ENCODE measurements at regions of chr20 and their contacts with region 1.

Region 1: GRCh38 chr20:63230800-63231268 is 4.9 kb upstream of the BIRC7 start:
- DNase-seq: peak; percentile 54
- H3K4me3 ChIP-seq: no peak overlapping the region
- H3K27ac ChIP-seq: no peak overlapping the region
- H3K4me1 ChIP-seq: no peaks in the 10 kb centered on the region
- H3K27me3 ChIP-seq: peaks cover 0 to 10% of the 10 kb centered on the region in 2 experiments
- CTCF ChIP-seq: peak; percentile 25 to 78
- POLR2A ChIP-seq: no peak

Region 2: DNA sequence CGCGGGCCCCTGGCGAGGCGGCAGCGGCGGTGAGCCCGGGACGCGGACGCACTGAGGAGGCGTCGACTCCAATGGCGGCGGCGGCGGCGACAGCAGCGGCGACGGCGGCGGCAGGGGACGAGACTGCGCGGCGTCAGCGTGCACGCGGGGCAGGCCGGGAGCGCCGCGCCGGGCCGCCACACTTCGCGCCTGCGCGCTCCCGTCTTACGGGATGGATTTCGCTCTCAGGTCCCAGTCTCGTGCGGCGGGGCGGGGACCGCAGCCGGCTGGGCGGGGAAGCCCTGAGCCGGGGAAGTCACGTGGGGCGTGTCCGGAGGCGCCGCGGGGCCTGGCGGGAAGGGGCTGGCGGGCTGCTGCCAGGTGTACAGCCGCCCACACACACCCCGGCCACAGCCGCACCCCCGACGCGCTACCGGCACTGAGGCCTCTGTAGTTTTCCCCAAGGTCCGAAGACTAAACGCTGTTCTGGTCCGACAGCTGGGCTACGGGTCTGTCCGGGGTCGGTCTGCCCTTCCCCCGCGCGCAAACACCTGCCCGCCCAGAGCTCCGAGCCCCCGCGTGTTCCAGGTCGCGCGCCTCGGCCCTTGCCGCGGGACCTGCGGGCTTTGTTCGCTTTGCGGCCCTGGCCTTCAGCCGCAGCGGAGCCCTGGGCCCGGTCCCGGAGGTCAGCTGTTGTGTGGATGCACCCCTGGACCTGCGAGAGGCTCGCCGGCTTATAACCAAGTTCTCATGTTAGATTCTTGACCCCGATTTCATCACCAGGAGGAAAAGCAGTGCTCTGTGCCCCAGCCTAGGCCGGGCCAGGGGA is 14.6 kb before region 1 on chr20 and contains the start of gene YTHDF1:
- CTCF ChIA-PET with region 1: interaction called, 15 read pairs
- POLR2A ChIA-PET with region 1: no interaction called
- dilution Hi-C with region 1: no loop called
- intact Hi-C with region 1: no loop called
- DNase-seq: peak; percentile 94
- H3K4me3 ChIP-seq: peak within 1 kb of the TSS; percentile 59 to 94 (median 86)
- H3K27ac ChIP-seq: peak within 1 kb of the TSS; percentile 79
- H3K4me1 ChIP-seq: peaks cover 13% of the 10 kb centered on the region
- H3K27me3 ChIP-seq: no peaks in the 10 kb centered on the region
- CTCF ChIP-seq: no peak
- POLR2A ChIP-seq: peak; percentile 75
- total RNA-seq, gene YTHDF1: 41.1 and 44.4 TPM in 2 replicates

Region 3: DNA sequence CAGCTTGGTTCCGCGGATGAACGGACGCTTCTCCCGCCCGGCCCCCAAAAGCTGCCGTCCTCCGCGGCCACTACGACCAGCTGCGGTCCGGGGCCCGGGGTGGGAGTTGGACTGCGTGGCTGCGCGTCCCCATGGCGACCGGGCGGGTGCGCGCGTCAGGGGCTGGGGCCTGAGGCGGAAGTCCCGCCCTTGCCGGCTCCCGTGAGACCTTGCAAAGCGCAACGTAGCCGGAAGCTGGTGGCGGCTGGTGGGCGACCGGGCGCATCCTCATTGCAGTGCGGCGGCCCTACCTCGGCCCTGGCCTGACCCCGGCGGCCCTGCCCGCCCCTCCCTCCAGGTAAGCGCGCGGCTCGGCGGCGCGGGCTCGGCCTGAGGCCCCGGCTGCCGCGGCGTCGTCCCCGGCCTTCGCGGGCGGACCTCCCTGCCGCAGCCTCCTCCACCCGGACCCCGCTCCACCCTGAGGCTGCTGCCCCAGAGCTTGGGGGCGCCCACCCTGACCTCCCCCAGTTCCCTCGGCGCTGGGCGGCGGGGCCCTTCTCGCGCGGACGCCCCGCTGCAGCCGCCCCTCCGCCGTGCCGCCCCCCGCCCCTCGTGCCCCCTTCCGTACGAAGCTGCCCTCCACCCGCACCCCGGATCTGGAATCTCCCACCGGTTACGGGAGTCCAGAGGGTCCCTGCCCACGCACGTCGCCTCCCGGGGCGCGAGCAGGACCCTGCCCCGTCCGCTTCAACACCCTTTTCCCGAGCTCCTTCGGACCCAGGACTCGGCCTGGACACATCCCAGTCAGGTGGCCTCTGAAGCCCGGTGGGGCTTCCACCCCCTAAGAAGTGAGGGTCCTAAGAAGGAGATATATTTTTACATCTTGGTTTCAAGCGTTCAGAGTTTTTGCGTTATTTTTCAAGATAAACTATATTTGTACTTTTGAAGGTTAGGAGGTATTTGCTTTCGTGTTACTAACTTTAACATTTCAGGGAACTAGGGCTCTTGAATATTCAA is 42.0 kb after region 1 on chr20 and contains the start of gene ARFGAP1:
- CTCF ChIA-PET with region 1: no interaction called
- POLR2A ChIA-PET with region 1: no interaction called
- dilution Hi-C with region 1: no loop called
- intact Hi-C with region 1: loop called (anchors 5 kb)
- DNase-seq: peak; percentile 86
- H3K4me3 ChIP-seq: peak within 1 kb of the TSS; percentile 82 to 89 (median 87)
- H3K27ac ChIP-seq: peak within 1 kb of the TSS; percentile 64
- H3K4me1 ChIP-seq: peaks cover 6% of the 10 kb centered on the region
- H3K27me3 ChIP-seq: no peaks in the 10 kb centered on the region
- CTCF ChIP-seq: no peak
- POLR2A ChIP-seq: peak; percentile 79
- total RNA-seq, gene ARFGAP1: 111 and 126 TPM in 2 replicates

Measured in endothelial cell of umbilical vein (primary cell).